ENCODE measurements at regions of chr1 and their contacts with region 1.

Region 1: DNA sequence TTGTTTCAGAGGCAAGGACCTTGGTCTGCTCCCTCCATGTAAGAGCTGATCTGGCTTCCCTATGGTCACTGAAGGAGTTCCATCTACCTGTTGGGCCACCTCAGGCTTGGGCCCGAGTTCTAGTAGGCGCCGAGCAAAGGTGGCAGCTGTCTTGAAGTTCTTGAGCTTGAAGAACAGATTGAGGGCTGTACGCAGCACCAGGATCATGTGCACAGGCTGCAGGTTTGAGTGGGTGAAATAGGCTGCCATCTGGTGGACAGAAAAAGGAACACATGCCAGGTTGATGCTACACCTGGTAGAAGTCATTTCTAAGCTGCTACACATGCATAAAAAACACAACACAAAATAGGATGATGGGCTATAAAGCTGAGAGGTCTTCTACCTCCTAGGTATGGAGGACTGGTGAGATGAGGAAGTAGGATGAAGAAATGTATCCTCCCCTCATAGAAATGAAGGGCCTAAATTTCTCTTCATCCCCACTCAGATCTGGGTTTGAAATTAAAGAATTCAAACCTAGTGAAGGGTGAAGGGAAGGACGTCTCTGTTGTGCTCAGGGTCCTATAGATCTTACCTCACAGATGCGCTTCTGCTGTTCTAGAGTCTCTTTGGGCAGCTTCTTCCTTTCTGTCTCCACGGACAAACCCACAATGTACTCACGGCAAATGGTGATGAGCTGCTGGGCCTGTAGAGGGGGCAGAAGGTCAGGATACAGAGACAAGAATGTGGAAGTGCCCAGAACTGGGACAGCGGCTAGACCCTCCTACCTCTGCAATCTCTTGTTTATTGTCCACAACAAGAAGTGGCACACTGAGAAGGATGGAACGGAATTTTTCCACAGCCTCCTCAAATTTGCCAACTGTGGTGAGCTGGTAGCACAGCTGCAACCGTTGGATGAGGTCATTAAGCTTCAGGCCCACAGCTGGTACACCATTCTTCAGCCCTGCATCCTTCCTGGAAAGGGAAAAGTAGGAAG is 6.6 kb upstream of the PEX19 start:
- DNase-seq: peak; percentile 73
- H3K4me3 Mint-ChIP-seq: no peak overlapping the region
- H3K27ac Mint-ChIP-seq: no peak overlapping the region
- H3K4me1 Mint-ChIP-seq: no peaks in the 10 kb centered on the region
- H3K27me3 Mint-ChIP-seq: no peaks in the 10 kb centered on the region

Region 2: DNA sequence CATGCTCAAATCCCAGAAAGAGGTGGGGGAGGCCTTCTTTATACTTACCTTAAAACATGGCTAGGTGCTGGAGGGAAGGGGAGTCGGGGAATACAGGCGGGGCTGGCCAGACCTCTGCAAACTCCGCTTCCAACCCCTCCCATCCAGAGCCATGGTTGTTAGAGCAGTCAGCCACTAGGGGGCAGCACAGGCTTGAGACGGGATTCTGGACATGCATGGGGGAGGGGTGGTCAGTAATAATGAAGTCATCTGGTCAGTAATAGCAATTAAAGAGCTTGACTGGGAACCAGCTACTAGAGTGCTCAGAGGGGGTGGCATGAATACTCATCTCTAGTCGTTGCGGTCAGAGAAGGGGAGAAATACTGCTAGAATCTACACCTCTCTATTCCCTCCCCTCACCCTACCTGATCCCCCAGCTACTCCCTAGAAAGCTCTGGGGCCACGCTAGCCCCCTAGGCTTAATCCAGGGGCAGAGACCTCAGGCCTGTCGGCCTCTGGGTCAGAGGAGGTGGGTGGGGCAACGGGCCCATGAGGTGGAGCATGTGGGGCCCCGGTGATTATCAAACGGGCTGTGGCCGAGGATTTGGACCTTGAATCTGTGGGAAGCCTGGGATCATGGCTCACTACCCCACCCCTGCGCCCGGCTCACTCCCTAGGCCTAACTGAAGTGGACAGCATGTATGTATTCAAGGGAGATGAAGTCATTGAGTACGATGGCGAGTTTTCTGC is 98.3 kb before region 1 on chr1:
- CTCF ChIA-PET with region 1: interaction called, 68 read pairs
- POLR2A ChIA-PET with region 1: interaction called, 8 read pairs
- DNase-seq: peak; percentile 81
- H3K4me3 Mint-ChIP-seq: no peak overlapping the region
- H3K27ac Mint-ChIP-seq: no peak overlapping the region
- H3K4me1 Mint-ChIP-seq: no peaks in the 10 kb centered on the region
- H3K27me3 Mint-ChIP-seq: peaks cover 2% of the 10 kb centered on the region

Region 3: DNA sequence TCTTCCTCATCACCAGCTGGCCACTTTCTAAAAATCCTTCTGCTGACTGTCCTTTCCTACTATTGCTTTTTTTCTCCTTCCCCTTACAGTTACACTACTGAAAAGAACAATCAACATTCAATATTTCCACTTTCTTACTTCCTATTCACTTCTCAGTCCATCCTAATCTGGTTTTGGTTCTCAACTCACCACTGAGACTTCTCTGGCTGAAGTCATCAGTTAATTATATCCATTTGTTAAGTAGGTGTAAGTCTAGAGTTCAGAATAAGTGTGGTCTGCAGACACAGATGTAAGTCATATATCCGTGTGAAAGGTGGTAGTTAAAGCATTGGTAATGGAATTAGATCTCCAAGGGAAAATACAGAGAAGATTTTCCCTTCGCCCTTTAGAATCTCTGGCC is 64.9 kb before region 1 on chr1:
- CTCF ChIA-PET with region 1: interaction called, 14 read pairs
- POLR2A ChIA-PET with region 1: interaction called, 3 read pairs
- DNase-seq: no peak
- H3K4me3 Mint-ChIP-seq: no peak overlapping the region
- H3K27ac Mint-ChIP-seq: no peak overlapping the region
- H3K4me1 Mint-ChIP-seq: no peaks in the 10 kb centered on the region
- H3K27me3 Mint-ChIP-seq: no peaks in the 10 kb centered on the region

Region 4: DNA sequence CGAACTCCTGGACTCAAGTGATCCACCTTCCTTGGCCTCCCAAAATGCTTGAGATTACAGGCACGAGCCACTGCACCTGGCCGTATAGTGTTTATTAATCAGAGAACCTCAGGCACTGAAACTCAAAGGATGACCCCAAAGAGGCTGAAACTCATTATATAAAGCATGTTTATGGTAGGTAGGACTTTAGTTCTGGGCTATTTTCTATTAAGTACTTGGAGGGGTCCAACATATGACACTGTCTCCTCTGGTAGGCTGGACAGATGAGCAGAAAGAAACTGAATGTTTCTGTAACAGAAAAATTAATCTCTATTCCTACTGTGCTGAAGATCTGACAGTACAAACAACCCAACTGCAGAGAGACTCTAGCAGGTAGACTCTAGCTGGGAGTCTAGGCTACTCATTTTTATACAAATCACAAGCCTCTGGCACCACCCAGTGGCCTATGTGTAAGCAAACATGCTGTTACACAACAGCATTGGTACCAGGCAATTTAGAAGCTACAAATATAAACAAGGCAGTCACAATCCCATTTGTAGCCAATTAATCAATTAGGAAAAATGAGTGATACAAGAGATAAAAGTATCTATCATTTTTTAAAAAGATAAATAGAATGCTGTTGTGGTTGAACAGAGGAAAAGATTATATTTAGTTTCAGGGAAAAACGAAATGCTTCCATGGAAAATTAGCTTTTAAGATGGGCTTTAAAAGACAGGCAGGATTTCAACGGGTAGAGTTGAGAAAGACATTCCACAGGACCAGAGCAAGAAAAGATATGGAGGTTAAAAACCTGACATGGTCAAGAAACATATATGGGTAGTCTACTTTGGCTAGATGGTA is 39.6 kb before region 1 on chr1:
- CTCF ChIA-PET with region 1: interaction called, 19 read pairs
- POLR2A ChIA-PET with region 1: interaction called, 7 read pairs
- DNase-seq: peak; percentile 64
- H3K4me3 Mint-ChIP-seq: no peak overlapping the region
- H3K27ac Mint-ChIP-seq: no peak overlapping the region
- H3K4me1 Mint-ChIP-seq: peaks cover 6% of the 10 kb centered on the region
- H3K27me3 Mint-ChIP-seq: no peaks in the 10 kb centered on the region

Region 5: GRCh38 chr1:160267284-160267991 is 24.1 kb before region 1 on chr1:
- CTCF ChIA-PET with region 1: interaction called, 42 read pairs
- POLR2A ChIA-PET with region 1: interaction called, 16 read pairs
- DNase-seq: no peak
- H3K4me3 Mint-ChIP-seq: no peak overlapping the region
- H3K27ac Mint-ChIP-seq: no peak overlapping the region
- H3K4me1 Mint-ChIP-seq: peaks cover 16% of the 10 kb centered on the region
- H3K27me3 Mint-ChIP-seq: no peaks in the 10 kb centered on the region

Region 6: GRCh38 chr1:160328184-160328583 is 36.6 kb after region 1 on chr1:
- CTCF ChIA-PET with region 1: interaction called, 11 read pairs
- POLR2A ChIA-PET with region 1: interaction called, 4 read pairs
- DNase-seq: no peak
- H3K4me3 Mint-ChIP-seq: no peak overlapping the region
- H3K27ac Mint-ChIP-seq: no peak overlapping the region
- H3K4me1 Mint-ChIP-seq: peaks cover 7% of the 10 kb centered on the region
- H3K27me3 Mint-ChIP-seq: no peaks in the 10 kb centered on the region

Region 7: GRCh38 chr1:160376525-160377131 is 85.1 kb after region 1 on chr1:
- CTCF ChIA-PET with region 1: interaction called, 30 read pairs
- POLR2A ChIA-PET with region 1: no interaction called
- DNase-seq: peak; percentile 38
- H3K4me3 Mint-ChIP-seq: no peak overlapping the region
- H3K27ac Mint-ChIP-seq: no peak overlapping the region
- H3K4me1 Mint-ChIP-seq: peaks cover 14% of the 10 kb centered on the region
- H3K27me3 Mint-ChIP-seq: peaks cover 8% of the 10 kb centered on the region

Measured in activated CD4-positive, alpha-beta memory T cell treated with anti-CD3 and anti-CD28 coated beads, Interleukin-2, amount 10 ng/mL, durations not matched to agents 7 days and 5 days (primary cell).